CD4-positive, alpha-beta memory T cell (primary cell): ENCODE measurements at regions of chr3 and their contacts with region 1.

Region 1: DNA sequence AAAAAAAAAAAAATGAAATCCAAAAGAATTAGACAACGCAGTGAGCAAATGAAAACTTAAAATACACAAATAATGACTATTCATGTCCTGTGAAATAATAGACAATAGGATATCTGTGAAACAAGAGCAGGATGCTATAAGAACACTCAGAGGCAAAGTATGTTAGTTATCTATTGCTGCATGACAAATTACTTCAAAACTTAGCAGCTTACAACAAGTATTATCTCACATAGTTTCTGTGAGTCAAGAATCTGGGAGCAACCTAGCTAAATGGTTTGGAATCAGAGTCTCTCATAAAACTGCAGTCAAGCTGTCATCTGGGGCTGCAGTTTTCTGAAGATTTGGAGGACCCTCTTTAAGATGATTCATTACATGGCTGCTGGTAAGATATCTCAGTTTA is 36.5 kb upstream of the ZMAT3 start:
- DNase-seq: no peak
- H3K4me3 ChIP-seq: no peak overlapping the region
- H3K4me3 Mint-ChIP-seq: no peak overlapping the region
- H3K27ac ChIP-seq: no peak overlapping the region
- H3K27ac Mint-ChIP-seq: no peak overlapping the region
- H3K4me1 ChIP-seq: no peaks in the 10 kb centered on the region
- H3K4me1 Mint-ChIP-seq: peaks cover 0 to 2% (median 1%) of the 10 kb centered on the region in 4 donors
- H3K27me3 ChIP-seq: peaks cover 4% of the 10 kb centered on the region
- H3K27me3 Mint-ChIP-seq: peaks cover 4 to 7% of the 10 kb centered on the region in 2 donors

Region 2: DNA sequence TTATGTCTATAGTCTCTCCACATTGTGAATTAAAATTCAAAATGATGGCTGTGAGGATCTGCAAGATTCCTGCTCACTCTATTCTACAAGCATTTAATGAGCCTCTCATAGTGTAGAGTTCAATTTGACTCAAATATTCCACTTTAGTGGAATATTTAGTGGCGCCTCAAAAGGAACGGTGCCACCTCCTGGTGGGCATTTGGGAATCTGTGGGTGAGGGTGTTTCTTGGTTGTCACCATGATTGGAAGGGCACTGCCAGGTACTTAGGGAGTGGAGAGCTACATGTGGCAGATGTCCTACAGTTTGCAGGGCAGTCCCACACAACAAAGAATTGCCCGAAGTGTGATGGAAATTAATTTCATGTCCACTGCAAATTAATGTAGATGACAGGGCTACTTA is 164.3 kb after region 1 on chr3:
- CTCF ChIA-PET with region 1: interaction called, 3 read pairs
- POLR2A ChIA-PET with region 1: no interaction called
- intact Hi-C with region 1: loop called (anchors 1 kb)
- DNase-seq: no peak
- H3K4me3 ChIP-seq: no peak overlapping the region
- H3K4me3 Mint-ChIP-seq: no peak overlapping the region
- H3K27ac ChIP-seq: no peak overlapping the region
- H3K27ac Mint-ChIP-seq: peak overlapping the region in 1 of 7 donors; percentile 1
- H3K4me1 ChIP-seq: no peaks in the 10 kb centered on the region
- H3K4me1 Mint-ChIP-seq: no peaks in the 10 kb centered on the region
- H3K27me3 ChIP-seq: no peaks in the 10 kb centered on the region
- H3K27me3 Mint-ChIP-seq: peaks cover 7 to 17% of the 10 kb centered on the region in 2 donors

Region 3: DNA sequence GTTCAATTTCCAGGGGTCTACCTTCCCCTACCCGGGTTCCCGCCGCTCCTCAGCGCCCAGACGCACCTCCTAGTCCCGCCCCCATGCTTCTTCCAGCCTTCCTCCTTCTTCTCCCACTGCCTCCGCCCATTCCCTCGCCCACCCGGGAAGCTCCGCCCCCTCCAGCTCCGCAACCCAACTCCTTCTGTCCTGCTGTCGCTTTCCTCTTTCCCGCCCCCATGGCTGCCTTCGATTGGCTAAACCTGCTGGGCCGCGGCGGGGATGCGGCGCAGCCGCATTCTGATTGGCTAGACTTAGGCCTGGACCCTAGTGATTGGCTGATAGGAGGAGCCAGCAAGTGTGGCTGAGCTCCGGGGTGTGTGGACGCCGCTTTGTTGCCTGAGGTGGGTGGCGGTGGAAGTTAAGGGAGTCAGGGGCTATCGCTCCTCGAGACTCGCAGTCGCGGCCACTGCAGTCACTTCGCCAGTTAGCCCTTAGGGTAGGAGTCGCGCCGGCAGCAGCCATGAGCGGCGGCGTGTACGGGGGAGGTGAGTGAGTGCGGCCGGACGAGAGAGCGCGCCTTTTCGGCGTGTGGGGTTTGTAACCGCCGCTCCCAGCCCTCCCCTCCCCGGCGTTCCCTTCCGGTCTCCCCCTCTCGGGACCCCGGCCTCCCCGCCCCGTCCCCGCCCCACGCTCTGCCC is 454.6 kb after region 1 on chr3 and contains the start of gene ACTL6A:
- CTCF ChIA-PET with region 1: interaction called, 3 read pairs
- POLR2A ChIA-PET with region 1: no interaction called
- intact Hi-C with region 1: loop called (anchors 1 kb)
- DNase-seq: peak; percentile 96 to 98 (median 96)
- H3K4me3 ChIP-seq: peak within 1 kb of the TSS; percentile 67 to 76
- H3K4me3 Mint-ChIP-seq: peak within 1 kb of the TSS; percentile 96 to 100 (median 99)
- H3K27ac ChIP-seq: peak within 1 kb of the TSS; percentile 58
- H3K27ac Mint-ChIP-seq: peak within 1 kb of the TSS; percentile 81 to 98 (median 97)
- H3K4me1 ChIP-seq: peaks cover 29% of the 10 kb centered on the region
- H3K4me1 Mint-ChIP-seq: peaks cover 22 to 37% (median 28%) of the 10 kb centered on the region in 4 donors
- H3K27me3 ChIP-seq: no peaks in the 10 kb centered on the region
- H3K27me3 Mint-ChIP-seq: peaks cover 0 to 4% of the 10 kb centered on the region in 2 donors
- total RNA-seq, gene ACTL6A: 56.9 to 62.4 TPM